ENCODE measurements at regions of chr17 and their contacts with region 1.

Region 1: DNA sequence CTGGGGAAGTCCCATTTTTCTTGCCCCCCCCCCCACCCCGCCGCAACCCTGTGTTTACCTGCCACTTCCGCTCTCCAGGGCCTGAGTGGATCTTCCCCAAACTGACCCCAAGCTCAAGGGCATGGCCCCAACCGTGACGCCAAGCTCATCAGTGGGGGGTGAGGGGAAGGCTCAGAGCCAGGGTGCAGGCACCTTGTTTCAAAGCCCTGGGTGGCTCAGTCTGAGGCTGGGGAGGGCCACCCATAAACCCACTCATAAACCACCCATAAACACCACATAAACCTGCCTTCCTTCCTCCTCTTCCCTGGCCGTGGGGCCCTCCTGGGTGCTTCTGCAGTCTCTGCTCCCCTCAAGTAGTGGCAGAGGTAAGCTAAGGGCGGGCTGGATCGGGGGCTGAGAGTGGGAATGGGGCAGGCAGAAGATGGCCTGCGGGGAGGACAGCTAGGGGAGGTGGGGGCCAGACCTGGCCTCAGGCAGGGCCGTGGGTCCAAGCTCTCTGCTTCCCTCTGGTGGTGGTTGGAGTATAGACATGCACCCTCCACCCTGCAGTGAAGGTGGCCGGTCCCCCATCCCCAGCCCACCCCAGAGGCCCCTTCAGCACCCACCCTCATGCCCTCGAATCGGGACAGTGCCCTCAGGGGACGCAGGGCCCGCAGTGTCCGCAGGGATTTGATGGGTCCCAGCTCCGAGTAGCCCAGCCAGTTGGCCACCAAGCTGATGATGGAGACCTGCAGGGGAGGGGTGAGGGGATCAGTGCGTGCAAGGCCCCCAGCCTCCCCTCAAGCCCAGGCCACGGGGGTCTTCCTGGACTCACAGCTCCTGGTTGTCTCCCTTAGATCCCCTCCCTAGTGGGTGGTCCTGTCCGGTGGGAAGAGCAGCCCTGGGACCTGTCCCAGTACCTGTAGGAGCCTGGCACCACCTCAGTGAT is 14.6 kb upstream of the CD79B start:
- DNase-seq: peak; percentile 77
- H3K4me3 Mint-ChIP-seq: peak overlapping the region; percentile 53
- H3K27ac Mint-ChIP-seq: peak overlapping the region; percentile 75
- H3K4me1 Mint-ChIP-seq: peaks cover 14% of the 10 kb centered on the region
- H3K27me3 Mint-ChIP-seq: no peaks in the 10 kb centered on the region

Region 2: DNA sequence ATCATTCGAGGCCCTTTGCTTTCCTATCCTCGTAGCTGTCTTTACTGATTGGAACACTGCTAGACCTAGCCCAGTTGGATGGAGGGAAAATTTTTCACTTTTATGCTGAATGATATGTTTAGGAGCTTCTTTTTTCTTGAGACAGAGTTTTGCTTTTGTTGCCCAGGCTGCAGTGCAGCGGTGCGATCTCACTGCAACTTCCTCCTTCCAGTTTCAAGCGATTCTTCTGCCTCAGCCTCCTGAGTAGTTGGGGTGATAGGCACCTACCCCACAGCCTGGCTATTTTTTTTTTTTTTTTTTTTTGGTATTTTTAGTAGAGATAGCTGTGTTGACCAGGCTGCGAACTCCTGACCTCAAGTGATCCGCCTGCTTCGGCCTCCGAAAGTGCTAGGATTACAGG is 136.7 kb before region 1 on chr17:
- CTCF ChIA-PET with region 1: no interaction called
- POLR2A ChIA-PET with region 1: no interaction called
- intact Hi-C with region 1: no loop called
- DNase-seq: no peak
- H3K4me3 Mint-ChIP-seq: no peak overlapping the region
- H3K27ac Mint-ChIP-seq: no peak overlapping the region
- H3K4me1 Mint-ChIP-seq: peaks cover 8% of the 10 kb centered on the region
- H3K27me3 Mint-ChIP-seq: no peaks in the 10 kb centered on the region

Region 3: DNA sequence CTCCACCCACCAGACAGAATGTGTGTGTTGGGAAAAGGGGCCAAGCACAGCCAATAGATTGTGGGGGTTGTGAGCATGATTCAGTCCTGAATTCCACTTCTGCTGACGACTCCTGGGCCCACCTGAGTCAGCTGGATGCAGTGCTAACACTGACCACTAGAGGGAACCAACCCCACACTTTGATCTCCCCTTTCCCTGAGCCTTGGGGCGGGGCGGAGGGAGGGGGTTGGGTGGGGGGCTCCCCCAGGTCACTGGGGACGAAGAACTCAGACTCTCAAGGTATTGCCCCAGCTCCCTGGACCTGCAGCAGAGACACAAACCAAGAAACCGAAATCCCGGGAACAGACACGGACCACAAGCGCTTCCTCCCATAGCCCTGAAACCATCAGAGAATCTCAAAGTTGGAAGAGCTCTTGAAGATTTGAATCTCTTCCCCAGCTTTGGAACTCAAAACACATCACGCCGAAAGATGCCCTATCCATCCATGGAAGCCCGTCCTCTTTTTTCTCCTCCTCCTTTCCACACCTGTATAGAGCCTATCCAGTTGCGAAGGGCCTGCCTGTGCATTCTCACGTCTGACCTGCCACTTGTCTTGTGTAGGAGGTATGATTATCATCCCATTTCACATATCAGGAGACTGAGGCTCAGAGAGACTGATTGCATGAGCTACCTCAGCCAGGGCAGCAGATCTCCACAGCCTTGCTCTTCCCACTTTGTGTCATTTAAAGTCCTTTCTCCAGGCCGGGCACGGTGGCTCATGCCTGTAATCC is 34.9 kb before region 1 on chr17:
- CTCF ChIA-PET with region 1: interaction called, 32 read pairs
- POLR2A ChIA-PET with region 1: no interaction called
- intact Hi-C with region 1: no loop called
- DNase-seq: peak; percentile 77
- H3K4me3 Mint-ChIP-seq: no peak overlapping the region
- H3K27ac Mint-ChIP-seq: no peak overlapping the region
- H3K4me1 Mint-ChIP-seq: no peaks in the 10 kb centered on the region
- H3K27me3 Mint-ChIP-seq: no peaks in the 10 kb centered on the region

Region 4: GRCh38 chr17:63931099-63931561 is 15.6 kb before region 1 on chr17:
- CTCF ChIA-PET with region 1: interaction called, 26 read pairs
- POLR2A ChIA-PET with region 1: interaction called, 11 read pairs
- intact Hi-C with region 1: loop called (anchors 1 kb)
- DNase-seq: peak; percentile 77
- H3K4me3 Mint-ChIP-seq: peak overlapping the region; percentile 95
- H3K27ac Mint-ChIP-seq: peak overlapping the region; percentile 91
- H3K4me1 Mint-ChIP-seq: peaks cover 17% of the 10 kb centered on the region
- H3K27me3 Mint-ChIP-seq: no peaks in the 10 kb centered on the region

Region 5: GRCh38 chr17:63966646-63967264 is 20.1 kb after region 1 on chr17:
- CTCF ChIA-PET with region 1: interaction called, 24 read pairs
- POLR2A ChIA-PET with region 1: no interaction called
- intact Hi-C with region 1: loop called (anchors 2 kb)
- DNase-seq: peak; percentile 70
- H3K4me3 Mint-ChIP-seq: no peak overlapping the region
- H3K27ac Mint-ChIP-seq: peak overlapping the region; percentile 5
- H3K4me1 Mint-ChIP-seq: peaks cover 15% of the 10 kb centered on the region
- H3K27me3 Mint-ChIP-seq: no peaks in the 10 kb centered on the region

Region 6: DNA sequence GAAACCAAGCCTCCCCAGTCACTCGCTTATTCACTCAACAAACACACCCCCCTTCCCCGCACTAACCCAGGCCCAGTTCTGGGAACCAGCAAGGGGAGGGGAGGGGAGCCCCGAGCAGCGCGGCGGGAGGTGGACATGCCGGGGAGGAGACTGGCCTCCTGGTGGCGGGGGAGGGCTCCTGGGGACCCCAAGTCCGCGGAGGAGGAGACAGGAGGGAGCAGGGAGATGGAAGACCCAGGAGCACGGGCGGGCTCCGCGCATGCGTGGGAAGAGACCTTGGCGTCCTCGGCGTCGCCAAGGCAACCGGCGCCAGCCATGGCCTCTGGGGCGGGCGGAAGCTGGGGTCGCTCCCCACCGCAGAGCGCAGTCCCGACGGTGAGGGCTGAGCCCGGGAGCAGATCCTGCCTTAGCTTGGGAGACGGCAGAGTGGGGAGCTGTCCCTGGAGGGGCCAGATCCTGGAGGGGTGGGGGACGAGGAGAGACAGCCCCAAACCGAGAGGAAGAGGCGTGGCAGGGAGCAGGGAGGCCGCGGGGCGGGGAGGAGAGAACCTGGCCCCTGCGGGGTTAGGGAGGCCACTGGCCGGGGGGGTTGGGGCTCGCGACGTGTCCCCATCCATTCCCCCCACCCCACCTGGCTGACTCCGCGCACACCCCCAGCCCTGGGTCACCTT is 51.5 kb after region 1 on chr17 and contains the start of gene PRR29:
- CTCF ChIA-PET with region 1: interaction called, 8 read pairs
- POLR2A ChIA-PET with region 1: no interaction called
- intact Hi-C with region 1: loop called (anchors 5 kb)
- DNase-seq: peak; percentile 81
- H3K4me3 Mint-ChIP-seq: peak within 1 kb of the TSS; percentile 88
- H3K27ac Mint-ChIP-seq: peak within 1 kb of the TSS; percentile 28
- H3K4me1 Mint-ChIP-seq: peaks cover 29% of the 10 kb centered on the region
- H3K27me3 Mint-ChIP-seq: peaks cover 3% of the 10 kb centered on the region
- total RNA-seq, gene PRR29: 2.0 to 3.4 TPM